Activated naive CD4-positive, alpha-beta T cell treated with anti-CD3 and anti-CD28 coated beads, Interleukin-2, amount 10 ng/mL, durations not matched to agents 7 days and 5 days (primary cell): ENCODE measurements at regions of chr18 and their contacts with region 1.

Region 1: GRCh38 chr18:32072321-32072720 is 19.4 kb upstream of the RNF138 start:
- DNase-seq: peak; percentile 28
- H3K4me3 Mint-ChIP-seq: no peak overlapping the region
- H3K27ac Mint-ChIP-seq: no peak overlapping the region
- H3K4me1 Mint-ChIP-seq: peaks cover 12% of the 10 kb centered on the region
- H3K27me3 Mint-ChIP-seq: no peaks in the 10 kb centered on the region

Region 2: GRCh38 chr18:31942999-31943865 is 129.1 kb before region 1 on chr18 and contains the start of gene TRAPPC8:
- CTCF ChIA-PET with region 1: interaction called, 12 read pairs
- DNase-seq: peak; percentile 94
- H3K4me3 Mint-ChIP-seq: peak within 1 kb of the TSS; percentile 99
- H3K27ac Mint-ChIP-seq: peak within 1 kb of the TSS; percentile 99
- H3K4me1 Mint-ChIP-seq: peaks cover 52% of the 10 kb centered on the region
- H3K27me3 Mint-ChIP-seq: no peaks in the 10 kb centered on the region

Region 3: GRCh38 chr18:31977270-31977872 is 95.0 kb before region 1 on chr18:
- CTCF ChIA-PET with region 1: interaction called, 11 read pairs
- DNase-seq: peak; percentile 47
- H3K4me3 Mint-ChIP-seq: no peak overlapping the region
- H3K27ac Mint-ChIP-seq: no peak overlapping the region
- H3K4me1 Mint-ChIP-seq: no peaks in the 10 kb centered on the region
- H3K27me3 Mint-ChIP-seq: peaks cover 17% of the 10 kb centered on the region

Region 4: GRCh38 chr18:32018331-32019250 is 53.7 kb before region 1 on chr18 and contains the start of gene RNF125:
- CTCF ChIA-PET with region 1: interaction called, 33 read pairs
- DNase-seq: peak; percentile 96
- H3K4me3 Mint-ChIP-seq: peak within 1 kb of the TSS; percentile 98
- H3K27ac Mint-ChIP-seq: peak within 1 kb of the TSS; percentile 100
- H3K4me1 Mint-ChIP-seq: peaks cover 61% of the 10 kb centered on the region
- H3K27me3 Mint-ChIP-seq: peaks cover 7% of the 10 kb centered on the region

Region 5: GRCh38 chr18:32083781-32084180 is 11.5 kb after region 1 on chr18:
- CTCF ChIA-PET with region 1: interaction called, 13 read pairs
- DNase-seq: no peak
- H3K4me3 Mint-ChIP-seq: no peak overlapping the region
- H3K27ac Mint-ChIP-seq: peak overlapping the region; percentile 53
- H3K4me1 Mint-ChIP-seq: peaks cover 42% of the 10 kb centered on the region
- H3K27me3 Mint-ChIP-seq: peaks cover 5% of the 10 kb centered on the region